ENCODE measurements at regions of chr5 and their contacts with region 1.

Region 1: GRCh38 chr5:168268949-168269943 is 22.2 kb upstream of the WWC1 start:
- DNase-seq: peak; percentile 87 to 98
- H3K4me3 ChIP-seq: peak overlapping the region; percentile 47; the same call in 1 of the 2 replicates
- H3K27ac ChIP-seq: peak overlapping the region; percentile 67
- H3K4me1 ChIP-seq: peaks cover 18% of the 10 kb centered on the region
- H3K27me3 ChIP-seq: no peaks in the 10 kb centered on the region
- CTCF ChIP-seq: peak; percentile 97

Region 2: DNA sequence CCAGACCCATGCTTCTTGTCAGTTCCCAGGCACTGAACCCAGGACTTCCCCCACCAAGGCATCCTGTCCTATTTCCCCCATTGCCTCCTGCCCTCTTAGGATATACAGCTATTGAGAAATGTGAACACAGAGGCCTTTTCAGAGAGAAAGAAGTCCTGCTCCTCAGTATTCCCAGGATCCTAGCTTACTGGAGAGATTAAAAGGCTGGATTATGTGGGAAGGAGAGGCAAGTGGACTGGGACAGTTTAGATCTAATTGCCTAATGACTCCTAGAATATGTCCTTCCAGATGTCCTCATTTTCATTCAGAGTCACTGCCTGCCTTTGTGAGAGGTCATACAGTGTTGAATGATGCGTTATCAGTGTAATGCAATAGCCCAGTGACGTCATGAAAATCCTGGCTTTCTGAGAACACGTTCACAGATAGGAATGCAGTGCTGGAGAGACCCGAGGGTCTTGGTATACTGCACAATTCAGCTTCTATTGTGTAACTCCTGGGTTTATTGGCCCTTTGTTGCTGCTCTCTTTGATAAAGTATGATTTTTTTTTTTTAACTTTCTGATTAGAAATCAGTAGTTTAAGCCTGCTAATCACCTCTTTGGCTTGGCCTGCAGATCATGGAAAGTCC is 48.4 kb after region 1 on chr5:
- CTCF ChIA-PET with region 1: no interaction called
- POLR2A ChIA-PET with region 1: no interaction called
- intact Hi-C with region 1: loop called (anchors 1 kb)
- DNase-seq: peak; percentile 74 to 96
- H3K4me3 ChIP-seq: no peak overlapping the region
- H3K27ac ChIP-seq: peak overlapping the region; percentile 85
- H3K4me1 ChIP-seq: peaks cover 78% of the 10 kb centered on the region
- H3K27me3 ChIP-seq: no peaks in the 10 kb centered on the region
- CTCF ChIP-seq: no peak

Region 3: GRCh38 chr5:168365581-168366081 is 96.4 kb after region 1 on chr5:
- CTCF ChIA-PET with region 1: interaction called, 3 read pairs
- POLR2A ChIA-PET with region 1: interaction called, 4 read pairs
- intact Hi-C with region 1: loop called (anchors 1 kb)
- DNase-seq: peak; percentile 88 to 98
- H3K4me3 ChIP-seq: peak overlapping the region; percentile 38; the same call in 1 of the 2 replicates
- H3K27ac ChIP-seq: peak overlapping the region; percentile 97
- H3K4me1 ChIP-seq: peaks cover 76% of the 10 kb centered on the region
- H3K27me3 ChIP-seq: no peaks in the 10 kb centered on the region
- CTCF ChIP-seq: peak; percentile 69

Region 4: GRCh38 chr5:168411871-168412270 is 142.6 kb after region 1 on chr5:
- CTCF ChIA-PET with region 1: no interaction called
- POLR2A ChIA-PET with region 1: no interaction called
- intact Hi-C with region 1: no loop called
- DNase-seq: no peak
- H3K4me3 ChIP-seq: no peak overlapping the region
- H3K27ac ChIP-seq: no peak overlapping the region
- H3K4me1 ChIP-seq: peaks cover 25% of the 10 kb centered on the region
- H3K27me3 ChIP-seq: no peaks in the 10 kb centered on the region
- CTCF ChIP-seq: no peak

Region 5: GRCh38 chr5:168472329-168472728 is 203.1 kb after region 1 on chr5:
- CTCF ChIA-PET with region 1: no interaction called
- POLR2A ChIA-PET with region 1: no interaction called
- intact Hi-C with region 1: loop called (anchors 1 kb)
- DNase-seq: peak; percentile 52 to 66
- H3K4me3 ChIP-seq: no peak overlapping the region
- H3K27ac ChIP-seq: no peak overlapping the region
- H3K4me1 ChIP-seq: no peaks in the 10 kb centered on the region
- H3K27me3 ChIP-seq: no peaks in the 10 kb centered on the region
- CTCF ChIP-seq: no peak; the same call in 1 of the 2 replicates

Region 6: GRCh38 chr5:168679515-168679920 is 410.3 kb after region 1 on chr5:
- CTCF ChIA-PET with region 1: no interaction called
- POLR2A ChIA-PET with region 1: no interaction called
- intact Hi-C with region 1: loop called (anchors 10 kb)
- DNase-seq: peak in 1 of 2 experiments; percentile 63
- H3K4me3 ChIP-seq: no peak overlapping the region
- H3K27ac ChIP-seq: no peak overlapping the region
- H3K4me1 ChIP-seq: no peaks in the 10 kb centered on the region
- H3K27me3 ChIP-seq: peaks cover 22% of the 10 kb centered on the region; the same call in 1 of the 2 replicates
- CTCF ChIP-seq: peak; percentile 95

Region 7: GRCh38 chr5:169701910-169702451 is 1432.7 kb after region 1 on chr5:
- CTCF ChIA-PET with region 1: no interaction called
- POLR2A ChIA-PET with region 1: no interaction called
- intact Hi-C with region 1: no loop called
- DNase-seq: peak in 1 of 2 experiments; percentile 56
- H3K4me3 ChIP-seq: no peak overlapping the region
- H3K27ac ChIP-seq: no peak overlapping the region
- H3K4me1 ChIP-seq: peaks cover 11% of the 10 kb centered on the region
- H3K27me3 ChIP-seq: no peaks in the 10 kb centered on the region
- CTCF ChIP-seq: peak; percentile 65; the same call in 1 of the 2 replicates